Naive thymus-derived CD4-positive, alpha-beta T cell (primary cell): ENCODE measurements at regions of chr5 and their contacts with region 1.

Region 1: DNA sequence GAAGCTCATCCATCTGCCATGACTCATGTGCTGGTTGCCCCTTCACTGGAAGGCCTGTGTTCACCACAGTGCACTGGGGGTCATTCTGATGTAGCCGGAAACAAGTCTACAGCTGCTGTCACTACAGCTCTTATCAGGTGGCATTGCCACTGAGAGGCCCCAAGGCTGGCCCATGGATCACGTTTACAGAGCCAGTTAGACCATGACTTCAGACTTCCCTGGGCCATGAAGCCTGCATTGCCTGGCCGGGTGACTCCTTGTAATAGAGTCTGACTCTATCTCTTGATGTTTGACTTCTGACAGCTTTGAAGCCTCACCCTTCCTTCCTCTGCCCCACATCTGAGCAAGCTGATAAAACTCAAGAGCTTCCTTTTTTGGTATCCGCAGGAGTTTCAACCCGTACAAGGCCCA is 473.5 kb upstream of the DAP start:
- DNase-seq: peak in 6 of 9 donors; percentile 2 to 34 (median 20)
- ATAC-seq: peak; percentile 81
- H3K4me3 ChIP-seq: no peak overlapping the region
- H3K4me3 Mint-ChIP-seq: peak overlapping the region; percentile 2 to 72 (median 48)
- H3K27ac ChIP-seq: no peak overlapping the region
- H3K27ac Mint-ChIP-seq: peak overlapping the region in 5 of 9 donors; percentile 0 to 56 (median 5)
- H3K4me1 ChIP-seq: peaks cover 9 to 19% of the 10 kb centered on the region in 2 donors
- H3K4me1 Mint-ChIP-seq: peaks cover 11 to 38% (median 25%) of the 10 kb centered on the region in 7 donors
- H3K27me3 ChIP-seq: no peaks in the 10 kb centered on the region
- H3K27me3 Mint-ChIP-seq: no peaks in the 10 kb centered on the region

Region 2: DNA sequence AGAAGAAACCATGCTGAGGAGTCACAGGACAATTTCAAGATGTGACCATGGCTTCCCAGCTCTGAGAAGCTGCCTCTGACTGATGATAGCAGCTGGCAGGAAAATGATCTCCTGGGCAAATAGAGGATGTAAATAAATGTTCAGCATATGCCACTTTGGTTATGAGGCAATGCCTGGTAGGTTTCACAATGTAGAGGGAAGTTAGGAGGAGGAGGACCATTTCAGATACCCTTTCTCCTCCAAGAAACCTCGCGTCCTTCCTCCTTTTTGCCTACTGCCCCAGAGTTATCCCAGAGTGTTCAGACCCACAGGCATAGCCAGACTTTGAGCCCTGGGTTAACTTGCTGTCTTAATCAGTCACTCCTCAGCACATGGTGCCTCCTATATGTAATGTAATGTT is 68.2 kb after region 1 on chr5:
- CTCF ChIA-PET with region 1: no interaction called
- POLR2A ChIA-PET with region 1: no interaction called
- intact Hi-C with region 1: loop called in 1 of 2 experiments (anchors 2 kb)
- DNase-seq: no peak
- ATAC-seq: peak; percentile 57
- H3K4me3 ChIP-seq: no peak overlapping the region
- H3K4me3 Mint-ChIP-seq: no peak overlapping the region
- H3K27ac ChIP-seq: no peak overlapping the region
- H3K27ac Mint-ChIP-seq: no peak overlapping the region
- H3K4me1 ChIP-seq: no peaks in the 10 kb centered on the region
- H3K4me1 Mint-ChIP-seq: no peaks in the 10 kb centered on the region
- H3K27me3 ChIP-seq: no peaks in the 10 kb centered on the region
- H3K27me3 Mint-ChIP-seq: peaks cover 0 to 5% (median 4%) of the 10 kb centered on the region in 5 donors